ENCODE measurements at regions of chr18 and their contacts with region 1.

Region 1: DNA sequence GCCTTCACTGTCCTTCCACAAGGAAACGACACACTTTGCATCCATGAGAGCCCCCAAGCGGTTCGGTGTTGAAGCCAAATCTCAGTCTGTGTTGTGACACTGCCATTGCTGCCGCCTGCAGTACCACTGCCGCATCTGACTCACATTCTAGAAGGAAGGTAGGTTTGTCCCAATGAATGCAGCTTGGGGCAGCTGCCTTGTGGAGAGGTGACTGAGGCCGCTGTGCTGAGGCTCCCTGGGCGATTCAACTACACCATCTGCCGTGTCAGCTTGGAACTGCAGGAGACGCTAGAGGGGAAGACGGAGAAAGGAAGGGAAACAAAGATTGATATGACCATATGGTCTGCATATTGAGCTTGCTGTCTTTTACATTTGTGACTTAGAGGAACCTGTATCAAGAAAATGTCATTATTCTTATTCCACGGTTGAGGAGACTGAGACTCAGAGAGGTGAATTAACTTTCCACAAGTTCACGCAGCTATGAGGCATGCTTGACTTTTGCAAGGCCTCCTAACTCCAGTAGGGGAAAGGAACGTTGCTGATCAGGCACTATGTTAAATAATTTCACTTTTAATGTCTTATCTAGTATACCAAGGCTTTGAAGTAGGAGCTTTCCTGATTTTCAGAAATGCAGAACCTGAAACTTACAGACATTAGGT is 43.5 kb upstream of the LMAN1 start:
- DNase-seq: peak; percentile 87
- H3K4me3 Mint-ChIP-seq: no peak overlapping the region
- H3K27ac Mint-ChIP-seq: no peak overlapping the region
- H3K4me1 Mint-ChIP-seq: no peaks in the 10 kb centered on the region
- H3K27me3 Mint-ChIP-seq: no peaks in the 10 kb centered on the region
- CTCF ChIP-seq: peak; percentile 98

Region 2: GRCh38 chr18:59228351-59228750 is 174.2 kb before region 1 on chr18:
- CTCF ChIA-PET with region 1: interaction called, 15 read pairs
- POLR2A ChIA-PET with region 1: no interaction called
- intact Hi-C with region 1: no loop called
- DNase-seq: no peak
- H3K4me3 Mint-ChIP-seq: no peak overlapping the region
- H3K27ac Mint-ChIP-seq: no peak overlapping the region
- H3K4me1 Mint-ChIP-seq: no peaks in the 10 kb centered on the region
- H3K27me3 Mint-ChIP-seq: peaks cover 89% of the 10 kb centered on the region
- CTCF ChIP-seq: no peak

Region 3: GRCh38 chr18:59300676-59301285 is 101.8 kb before region 1 on chr18:
- CTCF ChIA-PET with region 1: interaction called, 15 read pairs
- POLR2A ChIA-PET with region 1: interaction called, 3 read pairs
- intact Hi-C with region 1: no loop called
- DNase-seq: peak; percentile 45
- H3K4me3 Mint-ChIP-seq: no peak overlapping the region
- H3K27ac Mint-ChIP-seq: no peak overlapping the region
- H3K4me1 Mint-ChIP-seq: no peaks in the 10 kb centered on the region
- H3K27me3 Mint-ChIP-seq: peaks cover 20% of the 10 kb centered on the region
- CTCF ChIP-seq: no peak

Region 4: DNA sequence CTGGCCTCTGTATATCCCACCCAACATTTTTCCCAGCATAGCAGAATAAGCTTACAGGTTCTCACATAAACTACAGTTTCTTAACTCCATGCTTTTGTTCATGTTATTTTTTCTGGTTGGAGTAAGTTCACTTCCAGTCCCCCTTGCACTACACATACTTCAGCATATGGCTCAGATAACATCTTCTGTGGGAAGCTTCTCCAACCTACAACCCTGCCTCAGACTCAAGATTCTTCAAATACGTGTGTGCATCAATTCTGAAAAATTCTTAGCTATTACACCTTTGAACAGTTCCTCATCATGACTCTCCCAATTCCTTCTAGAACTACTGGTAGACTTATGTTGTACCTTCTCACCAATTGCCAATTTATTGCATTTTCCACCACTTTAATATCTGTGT is 76.6 kb before region 1 on chr18:
- CTCF ChIA-PET with region 1: interaction called, 11 read pairs
- POLR2A ChIA-PET with region 1: no interaction called
- intact Hi-C with region 1: no loop called
- DNase-seq: no peak
- H3K4me3 Mint-ChIP-seq: no peak overlapping the region
- H3K27ac Mint-ChIP-seq: no peak overlapping the region
- H3K4me1 Mint-ChIP-seq: no peaks in the 10 kb centered on the region
- H3K27me3 Mint-ChIP-seq: no peaks in the 10 kb centered on the region
- CTCF ChIP-seq: no peak

Region 5: DNA sequence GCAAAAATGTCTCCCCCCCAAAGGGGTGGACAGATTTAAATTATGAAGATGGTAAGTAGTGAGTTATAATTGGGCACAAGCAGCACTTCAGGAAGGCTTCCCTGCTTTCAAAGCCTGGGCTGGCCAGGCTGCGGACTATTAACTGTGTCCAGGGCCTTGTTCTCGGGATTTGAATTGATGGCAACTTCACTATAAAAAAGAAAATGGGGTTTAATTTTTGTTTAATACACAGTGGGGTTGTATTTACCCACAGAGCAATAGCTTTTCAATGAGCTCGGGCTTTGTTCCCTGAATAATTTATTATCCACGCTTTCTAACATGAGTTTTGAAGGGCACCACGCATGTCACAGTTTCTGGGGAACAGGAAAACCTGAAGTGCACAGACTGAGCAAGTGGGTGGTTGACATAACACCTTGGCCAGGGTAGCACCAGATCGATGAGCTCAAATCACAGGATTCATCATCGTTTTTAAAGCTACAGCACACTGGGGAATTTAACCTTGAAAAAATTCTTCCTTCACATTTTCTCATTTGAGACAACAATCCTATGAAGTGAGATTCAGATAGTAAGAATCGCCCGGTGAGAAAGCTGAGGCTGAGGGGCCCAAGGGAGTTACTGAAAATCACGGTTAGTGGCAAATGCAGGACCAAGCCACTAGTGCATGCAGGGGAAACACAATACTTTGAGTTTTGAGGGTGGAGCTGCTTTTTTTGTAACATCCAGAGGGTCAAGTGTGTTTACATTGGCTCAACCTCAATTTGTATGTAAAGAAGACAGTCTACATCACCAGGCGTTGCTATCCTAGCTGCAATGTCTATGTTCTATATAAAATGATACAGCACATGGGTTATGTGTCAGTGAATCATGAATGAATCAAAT is 14.6 kb before region 1 on chr18:
- CTCF ChIA-PET with region 1: interaction called, 27 read pairs
- POLR2A ChIA-PET with region 1: interaction called, 4 read pairs
- intact Hi-C with region 1: no loop called
- DNase-seq: no peak
- H3K4me3 Mint-ChIP-seq: no peak overlapping the region
- H3K27ac Mint-ChIP-seq: no peak overlapping the region
- H3K4me1 Mint-ChIP-seq: no peaks in the 10 kb centered on the region
- H3K27me3 Mint-ChIP-seq: no peaks in the 10 kb centered on the region
- CTCF ChIP-seq: no peak